Activated CD8-positive, alpha-beta T cell treated with anti-CD3 and anti-CD28 coated beads, Interleukin-2, amount 10 ng/mL, durations not matched to agents 7 days and 5 days (primary cell): ENCODE measurements at regions of chrX and their contacts with region 1.

Region 1: GRCh38 chrX:16826207-16826606 is 39.9 kb downstream of the TXLNG start:
- DNase-seq: peak; percentile 20
- ATAC-seq: no peak
- H3K4me3 Mint-ChIP-seq: no peak overlapping the region
- H3K27ac Mint-ChIP-seq: no peak overlapping the region
- H3K4me1 Mint-ChIP-seq: peaks cover 6% of the 10 kb centered on the region
- H3K27me3 Mint-ChIP-seq: no peaks in the 10 kb centered on the region

Region 2: GRCh38 chrX:16743604-16744325 is 82.4 kb before region 1 on chrX:
- CTCF ChIA-PET with region 1: no interaction called
- POLR2A ChIA-PET with region 1: no interaction called
- DNase-seq: no peak
- ATAC-seq: no peak
- H3K4me3 Mint-ChIP-seq: no peak overlapping the region
- H3K27ac Mint-ChIP-seq: no peak overlapping the region
- H3K4me1 Mint-ChIP-seq: no peaks in the 10 kb centered on the region
- H3K27me3 Mint-ChIP-seq: no peaks in the 10 kb centered on the region

Region 3: DNA sequence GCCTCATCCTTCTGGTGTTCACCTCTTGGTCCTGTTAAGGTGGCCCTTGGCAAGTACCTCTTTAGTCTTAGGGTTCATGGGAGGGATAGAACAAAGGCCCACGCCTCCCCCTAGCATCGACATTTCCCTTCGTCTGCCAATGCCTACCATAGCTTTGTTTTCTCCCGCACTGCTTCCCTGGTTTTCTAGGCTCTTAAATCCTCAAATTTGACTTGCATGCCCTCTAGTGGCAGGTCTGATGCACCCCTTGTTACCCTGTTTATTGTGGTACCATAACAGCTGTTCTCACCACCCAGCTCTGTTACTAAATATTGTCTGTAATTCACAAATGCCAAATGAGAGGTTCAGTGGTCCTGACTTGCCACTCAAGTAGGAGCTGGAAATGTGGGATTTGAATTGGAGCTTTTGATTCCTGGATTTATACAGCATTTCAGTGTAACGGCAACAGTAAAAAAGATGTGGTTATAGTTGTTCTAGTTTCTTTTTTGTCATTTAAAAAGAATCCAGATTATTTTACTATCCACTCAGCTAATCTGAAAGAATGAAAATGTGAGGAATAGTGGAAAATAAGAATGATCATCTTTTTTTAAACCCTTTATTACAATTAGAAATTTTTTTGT is 220.4 kb after region 1 on chrX:
- CTCF ChIA-PET with region 1: interaction called, 25 read pairs
- POLR2A ChIA-PET with region 1: no interaction called
- DNase-seq: peak; percentile 43
- ATAC-seq: no peak
- H3K4me3 Mint-ChIP-seq: no peak overlapping the region
- H3K27ac Mint-ChIP-seq: no peak overlapping the region
- H3K4me1 Mint-ChIP-seq: no peaks in the 10 kb centered on the region
- H3K27me3 Mint-ChIP-seq: no peaks in the 10 kb centered on the region